Body of pancreas (tissue), 4 donors: ENCODE measurements at regions of chr5 and their contacts with region 1.

Region 1: DNA sequence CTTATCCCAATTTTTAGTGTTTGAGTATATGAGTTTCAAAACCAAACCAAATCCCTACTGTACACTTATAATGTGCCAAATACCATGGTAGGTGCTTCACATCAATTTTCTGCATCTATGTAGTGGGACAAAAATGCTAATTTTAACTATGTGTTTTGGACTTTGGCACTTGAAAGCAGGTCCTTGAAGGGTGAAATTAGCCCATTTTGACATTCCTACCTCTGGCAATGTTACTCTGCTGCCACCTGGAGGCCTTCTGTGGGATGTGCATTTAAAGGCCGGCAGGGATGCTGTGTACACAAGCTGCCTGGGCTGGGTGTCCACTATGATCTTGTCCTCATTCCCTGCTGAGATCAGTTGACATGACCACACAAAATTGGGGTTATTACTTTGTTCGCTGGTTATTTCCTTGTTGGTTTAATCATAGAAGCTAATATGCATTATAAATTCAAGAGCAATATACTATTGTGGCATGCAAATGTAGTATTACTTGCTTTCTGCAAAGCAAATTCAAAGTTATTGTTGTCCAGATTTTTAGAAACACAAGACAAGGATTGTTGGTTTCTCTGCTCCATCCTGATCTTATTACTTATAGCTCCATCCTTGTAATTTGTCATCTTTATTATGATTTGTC is 166.8 kb downstream of the ARHGEF28 start:
- DNase-seq: peak; percentile 73 to 84 (median 80)
- ATAC-seq: peak; percentile 89
- H3K4me3 ChIP-seq: no peak overlapping the region
- H3K27ac ChIP-seq: no peak overlapping the region
- H3K4me1 ChIP-seq: peaks cover 5% of the 10 kb centered on the region
- H3K27me3 ChIP-seq: no peaks in the 10 kb centered on the region
- CTCF ChIP-seq: peak; percentile 91 to 97 (median 96)
- POLR2A ChIP-seq: no peak

Region 2: GRCh38 chr5:73591102-73591695 is 201.6 kb before region 1 on chr5:
- intact Hi-C with region 1: loop called (anchors 5 kb)
- DNase-seq: peak; percentile 45 to 83 (median 64)
- ATAC-seq: peak; percentile 84
- H3K4me3 ChIP-seq: no peak overlapping the region
- H3K27ac ChIP-seq: no peak overlapping the region
- H3K4me1 ChIP-seq: peaks cover 6% of the 10 kb centered on the region
- H3K27me3 ChIP-seq: no peaks in the 10 kb centered on the region
- CTCF ChIP-seq: peak; percentile 75 to 96 (median 89)
- POLR2A ChIP-seq: no peak